ENCODE measurements at regions of chr11 and their contacts with region 1.

Region 1: GRCh38 chr11:61129639-61130523 is 27.6 kb downstream of the CD5 start:
- DNase-seq: peak; percentile 96
- H3K4me3 Mint-ChIP-seq: peak overlapping the region; percentile 2
- H3K27ac Mint-ChIP-seq: peak overlapping the region; percentile 50
- H3K4me1 Mint-ChIP-seq: peaks cover 21% of the 10 kb centered on the region
- H3K27me3 Mint-ChIP-seq: no peaks in the 10 kb centered on the region

Region 2: GRCh38 chr11:60831143-60831500 is 298.8 kb before region 1 on chr11:
- CTCF ChIA-PET with region 1: interaction called, 10 read pairs
- intact Hi-C with region 1: loop called (anchors 1 kb)
- DNase-seq: peak; percentile 90
- H3K4me3 Mint-ChIP-seq: no peak overlapping the region
- H3K27ac Mint-ChIP-seq: no peak overlapping the region
- H3K4me1 Mint-ChIP-seq: no peaks in the 10 kb centered on the region
- H3K27me3 Mint-ChIP-seq: no peaks in the 10 kb centered on the region

Region 3: GRCh38 chr11:60970369-60970774 is 159.5 kb before region 1 on chr11:
- CTCF ChIA-PET with region 1: interaction called, 20 read pairs
- intact Hi-C with region 1: loop called (anchors 1 kb)
- DNase-seq: peak; percentile 90
- H3K4me3 Mint-ChIP-seq: peak overlapping the region; percentile 89
- H3K27ac Mint-ChIP-seq: peak overlapping the region; percentile 97
- H3K4me1 Mint-ChIP-seq: peaks cover 15% of the 10 kb centered on the region
- H3K27me3 Mint-ChIP-seq: no peaks in the 10 kb centered on the region

Region 4: DNA sequence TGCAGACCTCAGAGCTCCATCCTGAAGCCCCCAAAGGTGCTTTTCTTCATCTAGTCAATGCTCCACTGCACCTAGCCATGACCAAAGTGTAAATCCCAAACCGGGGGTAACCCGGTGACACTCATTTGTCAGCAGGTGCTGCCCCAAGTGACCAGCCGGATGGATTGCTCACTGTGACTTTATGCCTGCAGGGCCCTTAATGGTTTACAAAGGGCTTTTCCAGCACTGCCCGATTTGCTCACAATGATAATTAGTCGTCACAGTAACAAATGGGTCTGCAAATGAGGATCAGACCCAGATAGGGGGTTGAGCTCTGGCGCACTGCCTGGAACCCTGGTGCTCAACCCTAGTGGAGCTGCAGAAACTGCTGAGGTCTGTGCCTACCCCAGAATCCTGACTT is 73.3 kb before region 1 on chr11:
- CTCF ChIA-PET with region 1: no interaction called
- intact Hi-C with region 1: no loop called
- DNase-seq: no peak
- H3K4me3 Mint-ChIP-seq: no peak overlapping the region
- H3K27ac Mint-ChIP-seq: peak overlapping the region; percentile 80
- H3K4me1 Mint-ChIP-seq: peaks cover 81% of the 10 kb centered on the region
- H3K27me3 Mint-ChIP-seq: no peaks in the 10 kb centered on the region

Region 5: DNA sequence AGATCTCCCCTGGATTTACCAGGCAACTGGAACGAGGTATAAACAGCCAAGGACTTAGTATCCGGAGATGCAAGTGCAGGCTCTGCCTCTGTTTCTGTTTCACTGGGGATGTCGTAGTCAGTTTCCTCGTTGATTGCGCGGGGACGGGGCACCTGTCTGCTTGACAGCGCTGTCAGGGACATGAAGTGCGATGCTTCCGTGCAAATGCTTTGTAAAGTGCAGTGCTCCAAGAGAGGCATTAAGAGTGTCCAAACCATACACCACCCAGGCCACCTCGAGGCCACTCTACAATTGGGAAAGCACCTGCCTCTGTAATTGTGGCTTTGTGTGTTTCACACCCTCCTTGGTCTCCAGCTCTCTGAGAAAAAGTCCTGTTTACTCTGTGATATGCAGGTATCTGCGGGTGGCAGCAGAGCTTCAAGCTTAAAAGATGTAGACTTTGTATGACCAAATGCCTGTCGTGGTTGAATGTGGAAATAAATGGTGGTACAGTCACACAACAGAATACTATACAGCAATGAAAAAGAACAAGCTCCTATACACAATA is 46.2 kb before region 1 on chr11:
- CTCF ChIA-PET with region 1: interaction called, 40 read pairs
- intact Hi-C with region 1: loop called (anchors 2 kb)
- DNase-seq: peak; percentile 89
- H3K4me3 Mint-ChIP-seq: peak overlapping the region; percentile 76
- H3K27ac Mint-ChIP-seq: peak overlapping the region; percentile 99
- H3K4me1 Mint-ChIP-seq: peaks cover 70% of the 10 kb centered on the region
- H3K27me3 Mint-ChIP-seq: no peaks in the 10 kb centered on the region

Region 6: DNA sequence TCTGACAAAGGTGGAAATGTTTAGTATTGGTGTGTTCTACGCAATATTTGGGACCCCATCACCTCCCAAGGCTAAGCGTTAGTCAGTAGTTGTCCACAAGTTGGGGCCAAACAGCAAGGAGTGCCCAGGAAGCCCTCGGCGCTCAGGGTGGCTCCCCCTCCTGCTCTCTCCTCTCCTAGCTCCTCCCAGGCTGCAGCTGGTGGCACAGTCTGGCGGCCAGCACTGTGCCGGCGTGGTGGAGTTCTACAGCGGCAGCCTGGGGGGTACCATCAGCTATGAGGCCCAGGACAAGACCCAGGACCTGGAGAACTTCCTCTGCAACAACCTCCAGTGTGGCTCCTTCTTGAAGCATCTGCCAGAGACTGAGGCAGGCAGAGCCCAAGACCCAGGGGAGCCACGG is 10.8 kb before region 1 on chr11:
- CTCF ChIA-PET with region 1: interaction called, 22 read pairs
- intact Hi-C with region 1: no loop called
- DNase-seq: no peak
- H3K4me3 Mint-ChIP-seq: peak overlapping the region; percentile 39
- H3K27ac Mint-ChIP-seq: peak overlapping the region; percentile 67
- H3K4me1 Mint-ChIP-seq: peaks cover 73% of the 10 kb centered on the region
- H3K27me3 Mint-ChIP-seq: no peaks in the 10 kb centered on the region

Region 7: GRCh38 chr11:61168800-61169199 is 38.9 kb after region 1 on chr11:
- CTCF ChIA-PET with region 1: no interaction called
- intact Hi-C with region 1: no loop called
- DNase-seq: no peak
- H3K4me3 Mint-ChIP-seq: no peak overlapping the region
- H3K27ac Mint-ChIP-seq: no peak overlapping the region
- H3K4me1 Mint-ChIP-seq: peaks cover 36% of the 10 kb centered on the region
- H3K27me3 Mint-ChIP-seq: no peaks in the 10 kb centered on the region

Measured in activated naive CD4-positive, alpha-beta T cell treated with anti-CD3 and anti-CD28 coated beads for 36 hours (primary cell).